ENCODE measurements at regions of chr10 and their contacts with region 1.

Region 1: DNA sequence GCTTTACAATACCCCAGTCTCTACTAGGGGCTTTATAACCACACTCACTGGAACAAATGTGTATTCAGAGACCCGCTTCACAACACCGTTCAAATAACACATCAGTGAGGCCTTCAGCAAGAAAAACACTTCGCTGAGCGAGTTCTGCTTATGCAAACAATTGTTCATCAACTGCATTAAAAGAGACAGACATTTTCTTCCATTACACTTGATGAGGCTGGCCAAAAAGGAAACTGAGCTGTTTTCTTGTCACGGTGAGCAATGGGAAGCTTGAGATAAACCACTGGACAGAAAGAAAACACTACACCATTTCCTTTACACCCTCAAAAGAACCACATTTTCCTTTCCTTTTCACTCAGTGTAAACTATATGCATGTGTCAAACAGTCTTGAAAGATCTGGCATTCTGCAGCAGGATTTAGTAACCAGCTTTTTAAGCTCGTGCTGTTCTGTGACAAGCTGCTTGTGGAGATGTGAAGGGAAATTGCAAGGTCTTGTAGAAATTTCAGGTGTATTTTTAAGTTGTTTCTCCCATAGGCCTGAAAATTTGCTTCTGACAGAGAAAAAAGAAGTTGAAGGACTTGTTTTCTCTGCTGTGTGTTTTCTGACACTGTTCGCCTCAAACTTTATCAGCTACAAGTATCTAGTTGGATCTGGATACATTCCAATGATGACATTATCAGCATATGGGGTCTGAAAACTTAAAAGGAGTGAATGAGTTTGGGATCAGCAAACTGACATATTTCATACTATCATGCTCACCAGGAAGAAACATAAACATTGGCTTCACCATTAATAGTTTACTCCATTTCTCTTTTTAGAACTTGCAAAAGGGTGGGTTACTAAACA is 693.1 kb downstream of the PARD3 start:
- DNase-seq: peak; percentile 41
- H3K4me3 Mint-ChIP-seq: no peak overlapping the region
- H3K27ac Mint-ChIP-seq: peak overlapping the region; percentile 4
- H3K4me1 Mint-ChIP-seq: peaks cover 28% of the 10 kb centered on the region
- H3K27me3 Mint-ChIP-seq: no peaks in the 10 kb centered on the region

Region 2: GRCh38 chr10:33376976-33377657 is 744.9 kb before region 1 on chr10:
- CTCF ChIA-PET with region 1: no interaction called
- intact Hi-C with region 1: loop called (anchors 10 kb)
- DNase-seq: no peak
- H3K4me3 Mint-ChIP-seq: no peak overlapping the region
- H3K27ac Mint-ChIP-seq: no peak overlapping the region
- H3K4me1 Mint-ChIP-seq: peaks cover 22% of the 10 kb centered on the region
- H3K27me3 Mint-ChIP-seq: peaks cover 4% of the 10 kb centered on the region

Region 3: DNA sequence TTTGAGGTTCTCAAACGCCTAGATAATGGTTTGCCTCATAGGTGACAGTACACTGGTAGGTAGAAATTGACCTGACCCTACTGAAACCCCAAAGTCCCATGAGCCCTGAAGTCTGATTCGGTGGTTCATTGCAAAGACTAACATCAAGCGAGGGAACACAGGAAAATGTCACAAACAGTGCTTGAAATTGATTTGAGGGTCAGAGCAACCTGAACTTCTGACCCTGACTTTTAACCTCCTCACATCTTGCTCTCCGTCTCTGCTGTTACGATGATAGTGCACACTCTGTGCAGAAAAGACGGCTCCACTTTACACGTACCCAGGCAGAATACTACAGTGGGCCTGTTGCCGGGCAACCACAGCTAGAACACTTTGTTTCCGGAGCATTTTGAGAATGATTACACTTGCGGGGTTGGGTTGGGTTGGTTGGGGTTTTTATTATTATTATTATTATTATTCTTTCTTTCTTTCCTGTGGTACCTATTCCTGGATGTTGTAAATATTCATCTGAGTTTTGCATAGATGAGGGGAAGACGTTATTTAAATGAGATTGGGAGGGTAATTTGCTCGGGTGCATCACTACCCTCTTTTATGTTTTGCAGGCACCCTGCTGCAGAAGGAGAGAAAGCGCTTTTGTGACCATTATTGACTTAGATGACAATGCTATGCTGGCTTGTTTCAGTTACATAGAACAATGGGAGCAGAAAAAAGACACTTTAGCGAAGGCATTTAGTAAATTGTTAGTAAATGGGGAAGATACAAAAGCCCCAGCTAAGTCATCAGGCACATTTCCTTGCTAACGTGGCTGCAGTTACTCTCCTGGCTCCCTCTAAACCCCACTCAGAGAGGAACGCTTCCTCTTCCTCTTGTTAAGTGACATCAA is 349.4 kb before region 1 on chr10:
- CTCF ChIA-PET with region 1: no interaction called
- intact Hi-C with region 1: no loop called
- DNase-seq: peak; percentile 6
- H3K4me3 Mint-ChIP-seq: no peak overlapping the region
- H3K27ac Mint-ChIP-seq: no peak overlapping the region
- H3K4me1 Mint-ChIP-seq: peaks cover 5% of the 10 kb centered on the region
- H3K27me3 Mint-ChIP-seq: no peaks in the 10 kb centered on the region

Region 4: DNA sequence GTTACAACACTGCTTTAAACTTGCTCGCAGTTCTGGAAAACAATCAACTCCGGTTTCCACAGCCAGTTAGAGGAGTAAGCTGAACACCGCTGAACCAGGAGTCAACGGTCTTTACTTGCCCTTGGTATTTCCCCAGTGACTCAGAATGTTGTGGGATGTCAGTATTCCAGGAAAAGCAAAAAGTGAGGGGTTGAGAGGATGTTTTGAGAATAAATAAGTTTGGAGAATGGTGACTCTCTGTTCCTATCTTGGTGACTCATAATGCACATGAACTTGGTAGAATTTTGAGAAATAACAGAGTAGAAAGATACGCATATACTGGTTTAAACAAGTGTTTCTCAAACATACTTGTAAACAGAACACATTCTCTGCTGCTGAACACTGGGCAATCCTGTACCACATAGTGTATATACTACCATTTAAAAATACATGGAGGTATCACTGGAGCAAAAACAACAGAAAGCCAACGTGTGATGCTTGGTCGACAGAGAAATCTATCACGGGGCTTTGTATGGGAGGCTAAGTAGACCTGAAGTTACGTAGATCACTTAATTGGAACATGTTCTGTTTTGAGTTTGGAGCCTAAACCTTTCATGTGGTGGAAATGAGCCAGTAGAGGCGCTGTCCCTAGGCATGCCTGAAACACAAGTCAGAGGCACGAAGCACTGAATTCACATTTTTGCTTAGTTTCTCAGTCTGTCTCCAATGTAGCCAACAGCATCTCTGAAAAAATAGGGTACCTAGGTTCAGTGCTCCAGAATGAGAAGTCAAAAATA is 158.8 kb after region 1 on chr10:
- CTCF ChIA-PET with region 1: no interaction called
- intact Hi-C with region 1: loop called (anchors 1 kb)
- DNase-seq: peak; percentile 23
- H3K4me3 Mint-ChIP-seq: no peak overlapping the region
- H3K27ac Mint-ChIP-seq: peak overlapping the region; percentile 68
- H3K4me1 Mint-ChIP-seq: peaks cover 30% of the 10 kb centered on the region
- H3K27me3 Mint-ChIP-seq: peaks cover 6% of the 10 kb centered on the region

Measured in activated naive CD4-positive, alpha-beta T cell treated with anti-CD3 and anti-CD28 coated beads for 36 hours (primary cell).